ENCODE measurements at regions of chr2 and their contacts with region 1.

Region 1: GRCh38 chr2:198309673-198310280 is 505.4 kb downstream of the PLCL1 start:
- DNase-seq: peak; percentile 50
- ATAC-seq: peak; percentile 41
- H3K4me3 ChIP-seq: no peak overlapping the region
- H3K4me3 Mint-ChIP-seq: no peak overlapping the region
- H3K27ac ChIP-seq: no peak overlapping the region
- H3K27ac Mint-ChIP-seq: no peak overlapping the region
- H3K4me1 ChIP-seq: no peaks in the 10 kb centered on the region
- H3K4me1 Mint-ChIP-seq: no peaks in the 10 kb centered on the region
- H3K27me3 ChIP-seq: peaks cover 0 to 2% (median 0%) of the 10 kb centered on the region in 4 experiments
- H3K27me3 Mint-ChIP-seq: peaks cover 34% of the 10 kb centered on the region
- CTCF ChIP-seq: peak; percentile 97

Region 2: DNA sequence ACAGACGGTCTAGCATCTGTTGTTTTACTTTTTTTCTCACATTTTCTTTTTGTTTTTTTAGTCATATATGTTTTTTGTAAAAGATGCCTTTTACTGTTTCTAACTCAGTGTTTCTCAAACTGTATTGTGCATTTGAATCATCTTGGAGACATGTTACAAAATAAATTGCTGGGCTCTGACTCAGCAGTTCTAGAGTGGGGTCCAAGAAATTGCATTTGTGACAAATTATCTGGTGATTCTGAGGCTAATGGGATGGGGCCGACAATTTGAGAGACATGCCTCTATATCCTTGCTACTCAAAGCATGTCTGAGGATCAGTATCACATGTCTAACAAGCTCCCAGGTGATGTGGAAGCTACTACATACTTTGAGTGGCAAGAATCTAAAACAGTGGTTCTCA is 26.6 kb before region 1 on chr2:
- CTCF ChIA-PET with region 1: no interaction called
- POLR2A ChIA-PET with region 1: no interaction called
- intact Hi-C with region 1: no loop called
- DNase-seq: no peak
- ATAC-seq: no peak
- H3K4me3 ChIP-seq: no peak overlapping the region
- H3K4me3 Mint-ChIP-seq: no peak overlapping the region
- H3K27ac ChIP-seq: no peak overlapping the region
- H3K27ac Mint-ChIP-seq: no peak overlapping the region
- H3K4me1 ChIP-seq: no peaks in the 10 kb centered on the region
- H3K4me1 Mint-ChIP-seq: no peaks in the 10 kb centered on the region
- H3K27me3 ChIP-seq: no peaks in the 10 kb centered on the region
- H3K27me3 Mint-ChIP-seq: peaks cover 15% of the 10 kb centered on the region
- CTCF ChIP-seq: no peak

Region 3: GRCh38 chr2:198296665-198297308 is 13.0 kb before region 1 on chr2:
- CTCF ChIA-PET with region 1: interaction called, 66 read pairs
- POLR2A ChIA-PET with region 1: no interaction called
- intact Hi-C with region 1: no loop called
- DNase-seq: peak; percentile 60
- ATAC-seq: peak; percentile 69
- H3K4me3 ChIP-seq: no peak overlapping the region
- H3K4me3 Mint-ChIP-seq: no peak overlapping the region
- H3K27ac ChIP-seq: no peak overlapping the region
- H3K27ac Mint-ChIP-seq: no peak overlapping the region
- H3K4me1 ChIP-seq: no peaks in the 10 kb centered on the region
- H3K4me1 Mint-ChIP-seq: peaks cover 4% of the 10 kb centered on the region
- H3K27me3 ChIP-seq: peaks cover 0 to 7% (median 0%) of the 10 kb centered on the region in 4 experiments
- H3K27me3 Mint-ChIP-seq: peaks cover 11% of the 10 kb centered on the region
- CTCF ChIP-seq: peak; percentile 93

Region 4: GRCh38 chr2:198815626-198816025 is 505.8 kb after region 1 on chr2:
- CTCF ChIA-PET with region 1: no interaction called
- POLR2A ChIA-PET with region 1: no interaction called
- intact Hi-C with region 1: no loop called
- DNase-seq: no peak
- ATAC-seq: no peak
- H3K4me3 ChIP-seq: no peak overlapping the region
- H3K4me3 Mint-ChIP-seq: no peak overlapping the region
- H3K27ac ChIP-seq: no peak overlapping the region
- H3K27ac Mint-ChIP-seq: no peak overlapping the region
- H3K4me1 ChIP-seq: no peaks in the 10 kb centered on the region
- H3K4me1 Mint-ChIP-seq: no peaks in the 10 kb centered on the region
- H3K27me3 ChIP-seq: no peaks in the 10 kb centered on the region
- H3K27me3 Mint-ChIP-seq: no peaks in the 10 kb centered on the region
- CTCF ChIP-seq: no peak

Region 5: GRCh38 chr2:199488772-199489400 is 1179.1 kb after region 1 on chr2:
- CTCF ChIA-PET with region 1: interaction called, 15 read pairs
- POLR2A ChIA-PET with region 1: no interaction called
- intact Hi-C with region 1: loop called (anchors 2 kb)
- DNase-seq: peak; percentile 40
- ATAC-seq: no peak
- H3K4me3 ChIP-seq: no peak overlapping the region
- H3K4me3 Mint-ChIP-seq: no peak overlapping the region
- H3K27ac ChIP-seq: no peak overlapping the region
- H3K27ac Mint-ChIP-seq: no peak overlapping the region
- H3K4me1 ChIP-seq: no peaks in the 10 kb centered on the region
- H3K4me1 Mint-ChIP-seq: no peaks in the 10 kb centered on the region
- H3K27me3 ChIP-seq: peaks cover 0 to 2% (median 0%) of the 10 kb centered on the region in 4 experiments
- H3K27me3 Mint-ChIP-seq: peaks cover 16% of the 10 kb centered on the region
- CTCF ChIP-seq: peak; percentile 71

Region 6: DNA sequence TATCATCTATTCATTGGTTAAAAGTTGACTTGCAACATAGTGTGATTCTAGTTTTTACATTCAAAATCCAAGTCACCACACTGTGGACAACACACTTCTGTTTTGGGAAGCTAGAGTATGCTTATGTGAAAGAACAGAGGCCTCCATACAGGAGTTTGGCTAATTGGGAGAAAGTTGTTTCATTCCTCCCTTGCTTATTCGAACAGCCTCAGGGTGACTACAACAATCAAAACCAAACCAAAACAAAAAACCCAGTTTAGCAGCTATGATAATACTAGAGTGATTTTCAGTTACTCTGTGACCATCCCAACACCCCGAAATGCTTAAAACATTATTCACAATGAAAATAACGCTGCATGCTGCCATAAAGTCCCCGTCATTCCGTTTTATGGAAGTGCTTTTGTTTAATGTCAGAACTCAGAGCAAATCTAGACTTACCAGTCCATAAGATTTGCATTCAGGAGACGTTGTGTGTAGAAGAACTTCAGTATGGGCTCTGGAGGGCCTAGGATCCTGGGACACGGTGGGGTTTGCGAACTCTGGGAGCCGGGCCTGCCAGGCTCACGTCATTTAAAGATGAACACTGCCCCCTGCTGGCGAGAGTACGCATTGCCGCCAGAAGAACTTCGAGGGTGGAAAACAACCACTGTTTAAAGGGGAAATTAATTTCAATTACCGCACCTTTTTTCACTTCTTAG is 1429.8 kb after region 1 on chr2:
- CTCF ChIA-PET with region 1: interaction called, 37 read pairs
- POLR2A ChIA-PET with region 1: no interaction called
- intact Hi-C with region 1: loop called (anchors 1 kb)
- DNase-seq: peak; percentile 54
- ATAC-seq: no peak
- H3K4me3 ChIP-seq: no peak overlapping the region
- H3K4me3 Mint-ChIP-seq: no peak overlapping the region
- H3K27ac ChIP-seq: no peak overlapping the region
- H3K27ac Mint-ChIP-seq: no peak overlapping the region
- H3K4me1 ChIP-seq: no peaks in the 10 kb centered on the region
- H3K4me1 Mint-ChIP-seq: peaks cover 4% of the 10 kb centered on the region
- H3K27me3 ChIP-seq: peaks cover 0 to 8% (median 3%) of the 10 kb centered on the region in 4 experiments
- H3K27me3 Mint-ChIP-seq: peaks cover 34% of the 10 kb centered on the region
- CTCF ChIP-seq: peak; percentile 94

Region 7: GRCh38 chr2:199861132-199861774 is 1551.5 kb after region 1 on chr2:
- CTCF ChIA-PET with region 1: no interaction called
- POLR2A ChIA-PET with region 1: no interaction called
- intact Hi-C with region 1: loop called (anchors 2 kb)
- DNase-seq: peak; percentile 20
- ATAC-seq: no peak
- H3K4me3 ChIP-seq: no peak overlapping the region
- H3K4me3 Mint-ChIP-seq: no peak overlapping the region
- H3K27ac ChIP-seq: no peak overlapping the region
- H3K27ac Mint-ChIP-seq: no peak overlapping the region
- H3K4me1 ChIP-seq: no peaks in the 10 kb centered on the region
- H3K4me1 Mint-ChIP-seq: no peaks in the 10 kb centered on the region
- H3K27me3 ChIP-seq: no peaks in the 10 kb centered on the region
- H3K27me3 Mint-ChIP-seq: peaks cover 25% of the 10 kb centered on the region
- CTCF ChIP-seq: peak; percentile 70